PC-9 (cell line): ENCODE measurements at regions of chr7 and their contacts with region 1.

Region 1: GRCh38 chr7:76359111-76359978 is 554 bp upstream of the YWHAG start:
- DNase-seq: peak; percentile 93 to 96
- H3K4me3 ChIP-seq: peak overlapping the region; percentile 73; the same call in 1 of the 2 replicates
- H3K27ac ChIP-seq: peak overlapping the region; percentile 80
- H3K4me1 ChIP-seq: peaks cover 48% of the 10 kb centered on the region
- H3K27me3 ChIP-seq: no peaks in the 10 kb centered on the region
- CTCF ChIP-seq: peak; percentile 69

Region 2: DNA sequence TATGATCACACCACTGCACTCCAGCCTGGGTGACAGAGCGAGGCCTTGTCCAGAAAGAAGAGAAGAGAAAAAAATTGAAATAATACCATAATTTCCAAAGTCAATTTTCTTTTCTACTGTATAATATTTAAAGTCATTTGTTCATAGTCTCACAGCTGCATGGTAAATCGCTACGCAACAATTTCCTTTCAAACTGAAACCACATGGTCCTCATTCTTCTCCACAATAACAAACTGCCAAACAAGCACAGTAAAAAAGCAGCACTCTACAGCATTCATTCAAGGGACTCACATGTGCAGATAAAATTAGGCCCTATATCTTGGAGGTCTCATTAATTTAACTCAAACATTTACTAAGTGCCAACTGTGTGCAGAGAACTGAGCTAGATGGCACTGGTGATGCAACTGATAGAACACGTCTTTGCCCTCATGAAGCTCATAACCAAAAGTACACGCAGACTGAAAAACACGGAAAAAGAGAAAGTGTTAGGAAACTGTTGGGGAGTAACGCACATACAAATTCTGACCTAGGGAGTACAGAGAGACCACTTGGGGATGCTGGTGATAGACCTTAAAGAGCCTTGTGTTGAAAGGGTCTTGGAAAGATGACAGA is 226.1 kb before region 1 on chr7:
- CTCF ChIA-PET with region 1: no interaction called
- POLR2A ChIA-PET with region 1: interaction called, 20 read pairs
- intact Hi-C with region 1: no loop called
- DNase-seq: no peak
- H3K4me3 ChIP-seq: no peak overlapping the region
- H3K27ac ChIP-seq: no peak overlapping the region
- H3K4me1 ChIP-seq: no peaks in the 10 kb centered on the region
- H3K27me3 ChIP-seq: no peaks in the 10 kb centered on the region
- CTCF ChIP-seq: no peak

Region 3: DNA sequence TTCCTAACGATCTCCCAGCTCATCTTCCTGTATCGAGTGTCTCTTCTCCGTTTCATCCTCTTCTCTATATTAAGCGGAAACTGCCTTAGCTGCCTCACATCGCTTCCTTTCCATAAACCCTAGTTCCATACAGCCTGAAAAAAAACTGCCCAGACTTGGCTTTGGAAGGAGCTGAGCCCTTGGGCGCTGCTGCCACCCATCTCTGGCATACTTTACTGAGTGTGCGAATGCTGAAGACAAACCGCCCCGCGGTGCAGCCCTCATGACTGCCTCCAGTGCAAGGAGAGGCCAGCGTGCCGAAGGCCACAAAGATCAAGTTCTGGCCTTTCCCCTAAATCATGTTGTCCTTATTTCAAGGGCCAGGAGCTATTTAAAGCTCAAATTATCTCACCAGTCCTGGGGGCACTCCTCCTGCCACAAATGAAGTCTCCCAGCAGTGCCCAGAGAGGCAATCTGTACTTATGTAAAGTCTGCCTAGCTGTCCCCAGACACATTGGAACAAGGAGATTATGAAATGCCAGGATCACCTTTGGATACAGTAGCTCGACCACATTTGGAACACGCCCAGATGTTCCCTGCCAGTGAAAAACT is 25.7 kb before region 1 on chr7:
- CTCF ChIA-PET with region 1: interaction called, 4 read pairs
- POLR2A ChIA-PET with region 1: interaction called, 15 read pairs
- intact Hi-C with region 1: no loop called
- DNase-seq: no peak
- H3K4me3 ChIP-seq: no peak overlapping the region
- H3K27ac ChIP-seq: peak overlapping the region; percentile 47
- H3K4me1 ChIP-seq: peaks cover 38% of the 10 kb centered on the region
- H3K27me3 ChIP-seq: no peaks in the 10 kb centered on the region
- CTCF ChIP-seq: no peak

Region 4: DNA sequence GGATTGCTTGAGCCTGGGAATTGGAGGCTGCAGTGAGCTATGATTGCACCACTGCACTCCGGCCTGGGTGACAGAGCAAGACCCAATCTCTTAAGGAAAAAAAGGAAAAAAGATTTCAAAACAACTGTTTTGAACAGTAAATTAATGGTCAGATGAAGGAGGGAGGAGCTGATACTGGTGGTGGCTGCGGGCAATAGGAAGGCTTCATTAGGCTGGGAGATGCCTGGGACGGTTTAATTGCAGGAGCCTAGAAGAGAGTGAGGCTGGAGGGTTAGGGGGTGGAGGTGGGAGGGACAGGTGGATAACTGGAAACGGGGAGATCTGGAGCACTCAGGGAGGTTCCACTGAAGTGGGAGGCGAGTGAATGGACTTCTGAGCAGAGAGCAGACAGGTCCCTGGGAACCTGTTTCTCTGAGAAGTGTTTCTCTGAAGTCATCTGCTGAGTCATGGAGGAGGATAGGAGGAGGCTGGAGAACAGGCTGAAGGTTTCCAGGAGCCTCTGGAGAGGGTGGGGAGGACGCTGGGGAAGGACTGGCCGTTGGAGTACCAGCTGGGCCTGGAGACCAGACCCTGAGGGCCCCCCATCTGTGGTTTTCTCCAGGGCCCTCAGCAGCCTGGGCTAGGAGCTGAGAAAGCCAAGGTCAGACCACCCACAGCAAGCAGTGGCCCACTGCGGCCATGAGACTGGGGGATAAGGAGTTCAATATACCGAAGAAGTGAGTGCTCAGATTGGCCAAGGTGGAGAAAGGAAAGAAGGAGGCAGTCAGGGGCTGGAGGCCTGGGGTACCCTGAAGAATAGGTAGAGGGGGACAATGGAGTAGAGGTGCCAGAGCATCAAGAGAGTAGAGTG is 13.9 kb after region 1 on chr7:
- CTCF ChIA-PET with region 1: interaction called, 7 read pairs
- POLR2A ChIA-PET with region 1: interaction called, 20 read pairs
- intact Hi-C with region 1: loop called (anchors 1 kb)
- DNase-seq: peak; percentile 78 to 86
- H3K4me3 ChIP-seq: peak overlapping the region; percentile 41; the same call in 1 of the 2 replicates
- H3K27ac ChIP-seq: peak overlapping the region; percentile 90
- H3K4me1 ChIP-seq: peaks cover 36% of the 10 kb centered on the region
- H3K27me3 ChIP-seq: no peaks in the 10 kb centered on the region
- CTCF ChIP-seq: no peak

Region 5: DNA sequence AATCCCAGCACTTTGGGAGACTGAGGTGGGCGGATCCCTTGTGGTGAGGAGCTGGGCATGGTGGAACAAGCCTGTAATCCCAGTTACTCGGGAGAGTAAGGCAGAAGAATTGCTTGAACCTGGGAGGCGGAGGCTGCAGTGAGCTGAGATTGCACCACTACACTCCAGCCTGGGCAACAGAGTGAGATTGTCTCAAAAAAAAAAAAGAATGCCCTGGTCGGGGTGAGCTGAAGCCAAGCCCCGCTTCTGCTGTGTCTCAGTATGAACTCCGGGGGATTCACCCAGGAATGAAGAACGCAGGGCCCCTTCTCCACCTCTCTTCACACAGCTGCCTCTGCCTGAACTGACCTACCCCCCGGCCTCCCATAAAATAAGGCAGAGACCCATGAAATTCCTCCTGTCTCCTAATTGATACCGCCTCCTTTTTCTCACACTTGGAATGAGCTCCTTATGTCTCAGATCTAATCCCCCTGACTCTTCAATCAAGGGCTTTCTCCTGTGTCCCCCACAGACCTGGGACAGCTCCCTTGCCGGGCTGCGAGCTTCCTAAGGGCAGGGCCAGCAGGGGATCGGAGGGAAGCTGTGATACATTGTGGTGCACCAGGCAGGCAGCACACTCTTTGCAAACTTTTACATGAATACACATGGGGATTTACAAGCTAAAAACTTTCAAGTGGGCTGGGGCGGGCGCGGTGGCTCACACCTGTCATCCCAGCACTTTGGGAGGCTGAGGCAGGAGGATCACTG is 64.5 kb after region 1 on chr7:
- CTCF ChIA-PET with region 1: interaction called, 3 read pairs
- POLR2A ChIA-PET with region 1: interaction called, 6 read pairs
- intact Hi-C with region 1: loop called (anchors 1 kb)
- DNase-seq: no peak
- H3K4me3 ChIP-seq: no peak overlapping the region
- H3K27ac ChIP-seq: peak overlapping the region; percentile 78
- H3K4me1 ChIP-seq: peaks cover 48% of the 10 kb centered on the region
- H3K27me3 ChIP-seq: no peaks in the 10 kb centered on the region
- CTCF ChIP-seq: no peak

Region 6: GRCh38 chr7:77331938-77332695 is 972.8 kb after region 1 on chr7:
- CTCF ChIA-PET with region 1: interaction called, 10 read pairs
- POLR2A ChIA-PET with region 1: no interaction called
- intact Hi-C with region 1: no loop called
- DNase-seq: peak; percentile 59 to 61
- H3K4me3 ChIP-seq: no peak overlapping the region
- H3K27ac ChIP-seq: no peak overlapping the region
- H3K4me1 ChIP-seq: peaks cover 28% of the 10 kb centered on the region
- H3K27me3 ChIP-seq: no peaks in the 10 kb centered on the region
- CTCF ChIP-seq: peak; percentile 73